ENCODE measurements at regions of chr2 and their contacts with region 1.

Region 1: DNA sequence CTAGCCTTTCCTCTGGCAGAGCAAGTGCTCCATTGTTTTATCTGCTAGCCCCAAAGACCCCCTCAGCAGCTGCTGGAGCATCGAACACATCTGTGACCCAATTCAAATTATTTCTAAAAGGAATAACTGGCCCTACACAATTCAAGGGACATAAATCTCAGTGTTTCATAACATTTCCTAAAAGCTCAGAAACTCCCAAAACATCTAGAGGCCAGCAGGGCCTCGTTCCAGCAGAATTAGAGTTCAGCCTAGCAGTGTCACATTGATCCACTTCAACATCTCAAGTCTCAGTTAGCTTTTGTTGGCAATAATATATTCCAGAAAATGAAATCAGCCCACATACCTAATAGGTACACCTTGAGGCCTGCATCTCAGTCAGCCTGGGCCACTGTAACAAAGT is 179.1 kb downstream of the ETAA1 start:
- DNase-seq: no peak
- H3K4me3 ChIP-seq: no peak overlapping the region
- H3K27ac ChIP-seq: no peak overlapping the region
- H3K4me1 ChIP-seq: peaks cover 7% of the 10 kb centered on the region
- H3K27me3 ChIP-seq: no peaks in the 10 kb centered on the region
- CTCF ChIP-seq: no peak

Region 2: DNA sequence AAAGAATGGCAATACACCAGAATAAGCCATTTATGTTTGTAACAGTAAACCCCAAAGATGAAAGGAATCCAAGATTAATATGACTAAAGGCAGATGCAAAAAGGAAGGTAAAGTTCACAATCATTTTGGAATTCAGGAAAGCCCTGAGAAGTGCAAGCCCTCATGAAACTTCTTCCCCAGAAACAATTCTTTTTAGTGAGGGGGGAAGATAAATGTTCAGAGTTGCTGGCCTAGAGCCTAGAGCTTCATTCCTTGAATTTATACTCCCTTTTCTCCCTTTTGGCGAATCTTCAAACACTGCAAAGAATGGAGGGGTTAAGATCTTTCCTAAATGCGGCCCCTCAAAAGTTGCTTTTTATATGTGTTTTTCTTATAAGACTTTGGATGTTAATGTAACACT is 772.5 kb before region 1 on chr2:
- CTCF ChIA-PET with region 1: interaction called, 13 read pairs
- POLR2A ChIA-PET with region 1: no interaction called
- intact Hi-C with region 1: no loop called
- DNase-seq: no peak
- H3K4me3 ChIP-seq: no peak overlapping the region
- H3K27ac ChIP-seq: no peak overlapping the region
- H3K4me1 ChIP-seq: no peaks in the 10 kb centered on the region
- H3K27me3 ChIP-seq: no peaks in the 10 kb centered on the region
- CTCF ChIP-seq: no peak

Measured in A673 (cell line).